ENCODE measurements at regions of chr15 and their contacts with region 1.

Region 1: GRCh38 chr15:60351066-60351465 is 46.7 kb downstream of the ANXA2 start:
- DNase-seq: no peak
- H3K4me3 ChIP-seq: no peak overlapping the region
- H3K27me3 ChIP-seq: no peaks in the 10 kb centered on the region
- CTCF ChIP-seq: no peak

Region 2: GRCh38 chr15:60340207-60340921 is 10.7 kb before region 1 on chr15:
- CTCF ChIA-PET with region 1: no interaction called
- POLR2A ChIA-PET with region 1: no interaction called
- DNase-seq: no peak
- H3K4me3 ChIP-seq: no peak overlapping the region
- H3K27me3 ChIP-seq: no peaks in the 10 kb centered on the region
- CTCF ChIP-seq: peak; percentile 24; the same call in 1 of the 2 replicates

Region 3: DNA sequence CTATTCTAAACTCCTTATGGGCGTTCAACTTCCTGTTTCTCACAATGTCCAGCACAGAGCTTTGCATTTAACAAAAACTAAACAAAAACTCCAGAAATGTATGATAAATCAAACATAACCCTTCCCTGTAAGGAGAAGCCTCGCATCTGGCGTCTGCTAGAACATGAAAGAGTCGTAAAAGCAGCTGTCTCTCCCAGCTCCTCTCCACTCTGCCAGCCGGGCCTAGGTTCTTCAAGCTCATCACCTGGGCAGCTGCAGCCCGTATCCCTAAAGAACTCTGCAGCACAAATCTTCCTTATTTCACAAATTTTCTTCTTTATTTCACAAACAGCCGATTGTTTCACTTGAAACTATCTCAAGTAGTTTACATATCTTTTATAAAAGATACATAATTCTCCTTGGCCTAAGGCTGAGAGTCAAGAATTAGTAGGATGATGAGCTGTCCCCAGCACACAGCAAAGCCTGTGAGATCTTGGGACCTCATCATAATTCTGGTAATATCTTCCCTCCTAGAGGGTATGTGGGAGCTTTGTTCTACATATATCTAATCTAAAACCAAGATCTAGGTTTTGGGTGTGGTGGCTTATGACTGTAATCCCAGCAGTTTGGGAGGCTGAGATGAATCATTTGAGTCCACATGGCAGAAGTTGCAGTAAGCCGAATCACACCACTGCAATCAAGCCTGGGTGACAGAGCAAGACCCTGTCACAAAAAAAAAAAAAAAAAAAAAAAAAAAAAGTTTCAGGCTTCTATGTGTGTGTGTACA is 11.4 kb after region 1 on chr15:
- CTCF ChIA-PET with region 1: interaction called, 17 read pairs
- POLR2A ChIA-PET with region 1: no interaction called
- DNase-seq: peak; percentile 63
- H3K4me3 ChIP-seq: no peak overlapping the region
- H3K27me3 ChIP-seq: no peaks in the 10 kb centered on the region
- CTCF ChIP-seq: no peak

Region 4: DNA sequence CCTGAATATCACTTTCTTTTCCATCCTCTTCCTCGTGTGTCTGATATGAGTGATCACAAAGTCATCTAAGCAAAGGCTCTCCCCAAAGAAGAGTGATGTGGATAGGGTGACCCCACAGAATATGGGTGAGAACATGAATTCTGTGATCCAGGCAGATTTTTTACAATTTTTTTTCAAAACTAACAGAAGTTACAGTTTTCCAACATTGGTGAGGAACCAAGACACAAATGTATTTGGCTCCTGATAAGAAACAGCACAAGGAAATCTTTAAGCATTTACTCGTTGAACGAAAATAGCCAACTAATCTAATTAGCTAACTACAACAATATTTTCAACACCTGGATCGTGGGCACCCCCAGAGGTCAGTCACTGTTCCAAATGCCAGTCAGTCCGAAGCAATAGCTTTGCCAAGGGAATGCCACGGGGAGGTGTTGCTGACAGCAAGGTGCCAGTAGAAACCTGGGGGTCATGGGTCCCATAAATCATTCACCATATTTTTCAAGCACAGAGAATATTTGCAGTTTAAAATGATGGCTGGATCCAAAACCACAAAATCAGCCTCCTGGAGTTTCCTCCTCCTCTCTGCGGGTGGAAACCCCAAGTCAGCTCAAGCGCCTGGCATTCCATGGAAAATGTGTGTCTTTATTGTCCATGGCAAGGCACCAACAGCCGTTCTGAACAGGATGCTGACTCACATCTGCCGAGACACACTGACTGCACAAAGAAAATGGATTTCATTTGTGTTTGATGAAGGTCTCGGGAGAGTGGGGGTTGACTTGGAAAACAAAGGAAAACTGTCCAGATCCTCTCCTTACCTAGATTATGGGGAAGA is 20.0 kb after region 1 on chr15:
- CTCF ChIA-PET with region 1: interaction called, 3 read pairs
- POLR2A ChIA-PET with region 1: interaction called, 21 read pairs
- DNase-seq: peak; percentile 97
- H3K4me3 ChIP-seq: no peak overlapping the region
- H3K27me3 ChIP-seq: no peaks in the 10 kb centered on the region
- CTCF ChIP-seq: no peak

Region 5: DNA sequence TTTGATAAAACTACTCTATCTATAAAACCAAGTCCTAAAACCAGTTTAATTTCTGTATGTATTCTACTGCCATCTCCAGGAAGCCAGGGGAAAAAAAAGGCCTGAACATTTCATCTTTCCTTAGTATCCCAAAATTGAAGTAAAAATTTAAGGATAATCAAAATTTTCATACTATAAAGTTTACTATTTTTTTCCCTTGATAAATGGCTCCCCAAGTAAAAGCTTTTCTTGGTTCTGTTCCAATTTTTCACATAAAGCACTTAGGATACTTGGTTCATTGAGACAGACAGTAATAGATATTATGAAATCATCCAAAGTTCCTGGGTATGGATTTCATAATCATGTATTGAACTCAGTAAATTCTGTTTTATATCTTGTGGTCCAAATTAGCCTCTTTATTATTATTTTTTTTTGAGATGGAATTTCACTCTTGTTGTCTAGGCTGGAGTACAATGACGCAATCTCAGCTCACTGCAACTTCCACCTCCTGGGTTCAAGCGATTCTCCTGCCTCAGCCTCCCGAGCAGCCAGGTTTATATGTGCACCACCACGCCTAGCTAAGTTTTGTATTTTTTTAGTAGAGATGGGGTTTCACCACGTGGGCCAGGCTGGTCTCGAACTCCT is 93.3 kb after region 1 on chr15:
- CTCF ChIA-PET with region 1: interaction called, 10 read pairs
- POLR2A ChIA-PET with region 1: no interaction called
- DNase-seq: no peak
- H3K4me3 ChIP-seq: no peak overlapping the region
- H3K27me3 ChIP-seq: no peaks in the 10 kb centered on the region
- CTCF ChIP-seq: peak; percentile 68

Measured in BJ (cell line).